ENCODE measurements at regions of chr17 and their contacts with region 1.

Region 1: DNA sequence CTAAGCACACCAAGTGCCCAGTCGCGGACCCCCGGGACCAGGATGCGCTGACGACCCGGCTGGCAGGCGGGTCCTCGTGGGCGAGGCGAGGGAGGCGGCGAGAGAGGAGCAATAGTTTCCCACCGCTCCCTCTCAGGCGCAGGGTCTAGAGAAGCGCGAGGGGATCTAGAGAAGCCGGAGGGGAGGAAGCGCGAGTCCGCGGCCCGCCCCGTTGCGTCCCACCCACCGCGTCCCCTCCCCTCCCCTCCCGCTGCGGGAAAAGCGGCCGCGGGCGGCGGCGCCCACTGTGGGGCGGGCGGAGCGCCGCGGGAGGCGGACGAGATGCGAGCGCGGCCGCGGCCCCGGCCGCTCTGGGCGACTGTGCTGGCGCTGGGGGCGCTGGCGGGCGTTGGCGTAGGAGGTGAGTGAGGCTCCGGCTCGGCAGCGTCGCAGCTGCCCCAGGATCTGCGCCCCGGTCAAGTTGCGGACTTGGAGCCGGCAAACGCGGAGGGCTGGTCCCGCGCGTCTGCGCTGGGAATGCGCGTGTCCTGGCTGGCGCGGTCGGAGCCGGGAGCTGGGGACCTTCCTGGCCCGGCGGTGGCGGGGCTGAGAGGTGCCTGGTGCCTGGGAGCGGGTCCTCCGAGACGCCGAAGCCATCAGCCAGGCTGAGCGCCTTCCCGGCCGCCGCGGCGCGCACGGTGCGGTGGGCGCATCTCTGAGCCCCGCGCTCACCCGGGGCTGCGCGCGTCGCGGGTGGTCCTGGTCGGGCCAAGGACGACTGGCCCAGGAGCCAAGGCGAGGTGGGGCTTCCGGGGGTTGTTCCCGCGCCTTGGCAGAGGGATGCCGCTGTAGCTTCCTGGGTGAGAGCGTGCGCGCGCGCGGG is at the start of gene ITGB3:
- DNase-seq: peak; percentile 71
- H3K4me3 ChIP-seq: peak within 1 kb of the TSS; percentile 41 to 55 (median 54)
- H3K27ac ChIP-seq: no peak within 1 kb of the TSS
- H3K4me1 ChIP-seq: peaks cover 24% of the 10 kb centered on the region
- H3K27me3 ChIP-seq: peaks cover 11% of the 10 kb centered on the region
- CTCF ChIP-seq: peak in 1 of 2 donors; percentile 39
- total RNA-seq, gene ITGB3: 1.3 to 28.7 TPM

Region 2: DNA sequence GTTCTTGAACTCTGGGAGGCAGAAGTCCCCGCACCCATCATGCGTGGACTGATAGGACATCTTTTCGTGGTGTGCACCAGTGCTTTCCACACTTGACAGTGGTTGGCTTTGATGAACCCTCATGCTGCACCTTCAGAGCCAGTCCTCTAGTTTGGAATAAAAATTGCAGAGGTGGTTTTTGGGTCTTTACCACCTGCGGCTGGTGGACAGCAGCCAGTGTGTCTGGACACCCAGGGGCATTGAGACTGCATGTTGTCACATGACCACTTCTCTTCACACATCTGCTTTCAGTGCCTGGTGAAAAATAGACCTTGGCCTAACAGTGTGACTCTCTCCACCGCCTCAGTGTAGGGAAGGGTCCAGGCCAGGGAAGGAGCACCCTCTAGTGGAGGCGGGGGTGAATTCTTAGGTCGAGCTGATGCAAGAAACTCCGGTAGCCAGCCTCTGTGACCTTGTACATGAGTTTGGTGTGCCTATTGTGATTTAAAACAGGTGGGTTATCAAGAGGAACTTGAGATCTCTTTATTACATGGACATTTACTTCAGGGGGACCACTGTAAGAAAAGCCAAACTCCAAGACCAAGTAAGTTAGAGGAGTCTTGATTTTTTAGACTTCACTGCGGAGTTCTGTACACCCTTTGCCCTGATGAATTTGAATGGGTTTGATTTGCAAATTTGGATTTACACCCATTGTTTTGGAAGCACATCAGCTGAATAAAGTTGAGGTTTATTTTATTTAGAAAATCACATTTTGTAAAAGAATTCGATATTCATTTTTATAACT is 313.0 kb before region 1 on chr17:
- CTCF ChIA-PET with region 1: no interaction called
- dilution Hi-C with region 1: no loop called
- in situ Hi-C with region 1: no loop called
- intact Hi-C with region 1: no loop called
- DNase-seq: peak; percentile 49
- H3K4me3 ChIP-seq: no peak overlapping the region
- H3K27ac ChIP-seq: no peak overlapping the region
- H3K4me1 ChIP-seq: no peaks in the 10 kb centered on the region
- H3K27me3 ChIP-seq: no peaks in the 10 kb centered on the region
- CTCF ChIP-seq: peak; percentile 90 to 96

Region 3: DNA sequence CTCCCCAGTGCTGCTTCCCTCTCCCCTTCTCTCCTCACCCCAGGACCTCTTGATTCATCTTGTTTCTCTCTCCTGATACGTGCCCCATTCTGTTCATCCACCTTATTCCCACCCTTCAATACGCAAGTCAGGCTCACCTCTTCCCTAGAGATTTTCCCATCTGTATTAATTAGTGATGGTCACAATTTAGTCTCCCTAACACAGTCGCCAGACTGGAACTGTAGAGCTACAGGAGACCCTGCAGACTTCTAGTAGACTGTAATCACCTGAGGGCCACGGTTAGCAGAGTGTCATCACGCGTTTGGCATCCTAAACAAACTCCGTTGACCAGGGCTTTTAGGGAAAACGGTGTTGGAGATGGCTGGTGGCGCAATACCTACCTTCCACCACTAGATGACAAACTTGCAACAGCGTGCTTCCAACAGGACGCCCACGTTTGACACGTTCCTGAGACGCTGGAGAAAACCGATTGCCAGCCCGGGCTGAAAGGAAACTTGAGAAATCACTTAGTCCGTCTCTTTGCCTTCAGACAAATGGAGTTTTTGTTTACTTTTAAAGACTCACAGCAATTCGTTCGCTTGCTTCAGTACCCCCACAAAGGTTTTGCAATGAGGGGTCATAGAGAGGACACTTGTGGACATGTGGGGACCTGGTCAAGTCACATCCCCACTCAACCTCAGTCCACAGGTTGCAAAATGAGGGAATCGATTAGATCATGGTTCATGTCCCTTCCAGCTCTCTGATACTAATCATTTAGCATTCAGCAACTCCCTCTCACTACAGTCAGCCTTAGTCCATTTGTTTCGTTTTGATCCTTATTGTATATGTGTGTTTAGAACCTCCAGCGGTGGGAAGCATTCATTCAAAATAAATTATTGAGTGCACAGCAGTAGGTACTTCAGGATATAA is 24.0 kb before region 1 on chr17:
- CTCF ChIA-PET with region 1: no interaction called
- dilution Hi-C with region 1: no loop called
- in situ Hi-C with region 1: no loop called
- intact Hi-C with region 1: loop called (anchors 1 kb)
- DNase-seq: peak; percentile 89
- H3K4me3 ChIP-seq: peak overlapping the region; percentile 2 to 19 (median 13)
- H3K27ac ChIP-seq: no peak overlapping the region
- H3K4me1 ChIP-seq: peaks cover 21% of the 10 kb centered on the region
- H3K27me3 ChIP-seq: no peaks in the 10 kb centered on the region
- CTCF ChIP-seq: peak; percentile 100

Region 4: GRCh38 chr17:47279062-47279736 is 25.4 kb after region 1 on chr17:
- CTCF ChIA-PET with region 1: no interaction called
- dilution Hi-C with region 1: no loop called
- in situ Hi-C with region 1: no loop called
- intact Hi-C with region 1: loop called (anchors 2 kb)
- DNase-seq: peak; percentile 99
- H3K4me3 ChIP-seq: no peak overlapping the region
- H3K27ac ChIP-seq: peak overlapping the region; percentile 56
- H3K4me1 ChIP-seq: peaks cover 53% of the 10 kb centered on the region
- H3K27me3 ChIP-seq: no peaks in the 10 kb centered on the region
- CTCF ChIP-seq: no peak

Region 5: DNA sequence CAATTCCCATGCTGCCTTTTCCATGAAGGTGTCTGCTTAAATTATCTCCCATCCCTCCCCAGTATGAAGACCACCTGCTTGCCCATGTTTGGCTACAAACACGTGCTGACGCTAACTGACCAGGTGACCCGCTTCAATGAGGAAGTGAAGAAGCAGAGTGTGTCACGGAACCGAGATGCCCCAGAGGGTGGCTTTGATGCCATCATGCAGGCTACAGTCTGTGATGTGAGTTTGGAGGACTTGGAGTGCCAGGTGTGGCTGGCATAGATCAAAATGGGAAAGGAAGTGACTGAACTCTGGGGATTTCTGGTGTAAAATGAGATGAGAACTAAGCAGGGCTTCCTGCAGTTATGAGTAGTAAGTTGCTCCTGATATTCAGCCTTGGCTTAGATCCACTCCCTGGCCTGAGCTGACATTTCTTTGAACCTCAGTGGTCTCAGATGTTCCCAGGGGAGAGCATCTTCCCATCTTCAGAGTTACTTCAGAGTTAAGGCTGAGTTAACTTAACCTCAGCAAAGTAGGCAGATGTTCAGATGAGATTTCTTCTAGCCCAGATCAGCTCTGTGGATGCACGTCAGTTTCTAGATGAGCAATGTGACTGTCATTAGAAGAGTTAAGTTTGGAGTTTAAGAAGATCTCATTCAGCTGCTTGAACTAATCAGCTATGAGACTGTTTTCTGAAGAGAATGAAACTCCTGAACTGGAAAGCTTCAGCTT is 32.6 kb after region 1 on chr17:
- CTCF ChIA-PET with region 1: no interaction called
- dilution Hi-C with region 1: loop called (anchors 5 kb)
- in situ Hi-C with region 1: no loop called
- intact Hi-C with region 1: loop called (anchors 5 kb)
- DNase-seq: no peak
- H3K4me3 ChIP-seq: no peak overlapping the region
- H3K27ac ChIP-seq: no peak overlapping the region
- H3K4me1 ChIP-seq: peaks cover 6% of the 10 kb centered on the region
- H3K27me3 ChIP-seq: no peaks in the 10 kb centered on the region
- CTCF ChIP-seq: no peak

Region 6: GRCh38 chr17:47295062-47295845 is 41.5 kb after region 1 on chr17:
- CTCF ChIA-PET with region 1: no interaction called
- dilution Hi-C with region 1: no loop called
- in situ Hi-C with region 1: loop called in 1 of 2 experiments (anchors 5 kb)
- intact Hi-C with region 1: loop called (anchors 5 kb)
- DNase-seq: no peak
- H3K4me3 ChIP-seq: no peak overlapping the region
- H3K27ac ChIP-seq: no peak overlapping the region
- H3K4me1 ChIP-seq: peaks cover 13% of the 10 kb centered on the region
- H3K27me3 ChIP-seq: no peaks in the 10 kb centered on the region
- CTCF ChIP-seq: no peak

Region 7: GRCh38 chr17:47305302-47305923 is 51.6 kb after region 1 on chr17:
- CTCF ChIA-PET with region 1: no interaction called
- dilution Hi-C with region 1: no loop called
- in situ Hi-C with region 1: no loop called
- intact Hi-C with region 1: no loop called
- DNase-seq: peak; percentile 90
- H3K4me3 ChIP-seq: no peak overlapping the region
- H3K27ac ChIP-seq: no peak overlapping the region
- H3K4me1 ChIP-seq: peaks cover 15% of the 10 kb centered on the region
- H3K27me3 ChIP-seq: peaks cover 2% of the 10 kb centered on the region
- CTCF ChIP-seq: no peak